HepG2 (cell line): ENCODE measurements at regions of chr16 and their contacts with region 1.

Region 1: GRCh38 chr16:50354629-50355456 is 13.9 kb downstream of the BRD7 start:
- DNase-seq: no peak
- ATAC-seq: no peak
- H3K4me3 ChIP-seq: no peak overlapping the region
- H3K27ac ChIP-seq: no peak overlapping the region
- H3K4me1 ChIP-seq: no peaks in the 10 kb centered on the region
- H3K27me3 ChIP-seq: no peaks in the 10 kb centered on the region
- CTCF ChIP-seq: peak; percentile 55
- EP300 ChIP-seq: no peak
- POLR2A ChIP-seq: no peak
- RAD21 ChIP-seq: no peak

Region 2: DNA sequence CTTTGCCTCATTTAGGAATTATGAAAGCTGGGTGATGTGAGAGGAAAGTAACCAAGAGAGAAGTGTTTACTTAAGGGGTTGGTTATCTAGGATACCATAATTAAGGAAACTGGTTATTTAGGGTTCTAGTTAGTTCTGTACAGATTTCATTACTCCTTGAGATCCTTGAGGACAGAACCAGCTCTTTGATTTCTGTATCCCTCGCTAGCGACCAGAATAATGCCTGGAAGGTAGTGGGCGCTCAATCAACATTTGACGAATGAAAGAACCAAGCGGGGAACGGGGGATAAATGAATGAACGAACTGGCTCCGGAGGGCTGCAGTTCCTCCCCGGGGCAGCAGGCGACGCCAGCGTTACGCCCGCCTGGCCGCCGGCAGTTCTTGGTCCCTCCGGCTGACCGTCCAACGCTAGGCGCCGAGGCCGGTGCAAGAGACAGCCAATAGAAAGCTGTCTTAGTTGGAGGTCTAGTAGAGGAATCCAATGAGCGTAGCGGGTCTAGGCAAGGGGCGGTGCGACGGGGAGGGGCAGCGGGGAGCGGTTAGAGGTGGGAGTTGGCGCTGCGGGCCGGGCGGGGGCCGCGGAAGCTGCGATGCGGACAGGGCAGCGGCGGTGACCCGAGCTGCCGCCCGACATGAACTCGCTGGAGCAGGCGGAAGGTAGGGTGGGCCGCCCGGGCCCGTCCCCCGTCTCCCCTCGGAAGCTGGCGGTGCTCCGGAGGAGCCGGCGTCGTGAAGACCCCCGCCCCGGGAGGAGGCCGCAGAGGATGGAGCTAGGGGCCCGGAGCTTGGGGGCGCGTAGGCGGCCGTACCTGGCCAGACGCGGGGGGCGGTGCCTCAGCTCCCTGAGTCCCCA is 329.9 kb before region 1 on chr16 and contains the start of gene CNEP1R1:
- CTCF ChIA-PET with region 1: no interaction called
- POLR2A ChIA-PET with region 1: no interaction called
- in situ Hi-C with region 1: loop called (anchors 25 kb)
- intact Hi-C with region 1: loop called (anchors 10 kb)
- DNase-seq: peak; percentile 97
- ATAC-seq: peak; percentile 97
- H3K4me3 ChIP-seq: peak within 1 kb of the TSS; percentile 71 to 96 (median 85)
- H3K27ac ChIP-seq: peak within 1 kb of the TSS; percentile 56
- H3K4me1 ChIP-seq: peaks cover 44% of the 10 kb centered on the region
- H3K27me3 ChIP-seq: no peaks in the 10 kb centered on the region; a peak in 2 of 5 replicates
- CTCF ChIP-seq: peak; percentile 100
- EP300 ChIP-seq: peak; percentile 35 to 50; a peak in 2 of 4 replicates
- POLR2A ChIP-seq: peak; percentile 57 to 86
- RAD21 ChIP-seq: peak; percentile 100
- total RNA-seq, gene CNEP1R1: 22.9 and 23.6 TPM in 2 replicates

Region 3: DNA sequence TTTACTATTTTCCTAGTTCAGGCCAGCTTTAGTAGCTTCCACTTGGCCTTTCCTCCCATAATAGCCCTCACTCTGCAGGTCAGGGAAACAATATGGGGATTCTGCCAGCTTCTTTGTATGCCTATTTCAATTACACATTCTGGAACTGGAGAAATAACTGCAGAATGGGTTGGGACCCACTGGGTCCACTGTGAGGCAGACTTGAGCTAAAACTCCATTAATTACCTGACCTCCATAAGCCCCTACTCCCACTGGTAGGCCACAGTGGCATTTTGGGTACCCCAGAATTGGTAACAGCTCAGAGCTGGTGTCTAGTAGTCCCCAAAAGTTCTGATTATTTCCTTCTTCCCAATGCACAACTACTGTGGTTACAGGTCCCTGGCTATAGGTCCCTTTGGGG is 218.4 kb before region 1 on chr16:
- CTCF ChIA-PET with region 1: no interaction called
- POLR2A ChIA-PET with region 1: no interaction called
- in situ Hi-C with region 1: no loop called
- intact Hi-C with region 1: loop called (anchors 10 kb)
- DNase-seq: no peak
- ATAC-seq: peak; percentile 41; the same call in 2 of the 3 replicates
- H3K4me3 ChIP-seq: no peak overlapping the region
- H3K27ac ChIP-seq: no peak overlapping the region
- H3K4me1 ChIP-seq: peaks cover 4% of the 10 kb centered on the region; the same call in 1 of the 2 replicates
- H3K27me3 ChIP-seq: peaks cover 1 to 10% of the 10 kb centered on the region in 2 experiments; a peak in 3 of 5 replicates
- CTCF ChIP-seq: peak; percentile 36
- EP300 ChIP-seq: no peak
- POLR2A ChIP-seq: no peak
- RAD21 ChIP-seq: no peak

Region 4: GRCh38 chr16:50210266-50211038 is 144.4 kb before region 1 on chr16:
- CTCF ChIA-PET with region 1: interaction called, 21 read pairs
- POLR2A ChIA-PET with region 1: no interaction called
- in situ Hi-C with region 1: no loop called
- intact Hi-C with region 1: loop called (anchors 2 kb)
- DNase-seq: peak; percentile 77
- ATAC-seq: peak; percentile 98
- H3K4me3 ChIP-seq: no peak overlapping the region
- H3K27ac ChIP-seq: no peak overlapping the region
- H3K4me1 ChIP-seq: peaks cover 40% of the 10 kb centered on the region
- H3K27me3 ChIP-seq: no peaks in the 10 kb centered on the region
- CTCF ChIP-seq: peak; percentile 94
- EP300 ChIP-seq: no peak
- POLR2A ChIP-seq: no peak
- RAD21 ChIP-seq: peak; percentile 92

Region 5: DNA sequence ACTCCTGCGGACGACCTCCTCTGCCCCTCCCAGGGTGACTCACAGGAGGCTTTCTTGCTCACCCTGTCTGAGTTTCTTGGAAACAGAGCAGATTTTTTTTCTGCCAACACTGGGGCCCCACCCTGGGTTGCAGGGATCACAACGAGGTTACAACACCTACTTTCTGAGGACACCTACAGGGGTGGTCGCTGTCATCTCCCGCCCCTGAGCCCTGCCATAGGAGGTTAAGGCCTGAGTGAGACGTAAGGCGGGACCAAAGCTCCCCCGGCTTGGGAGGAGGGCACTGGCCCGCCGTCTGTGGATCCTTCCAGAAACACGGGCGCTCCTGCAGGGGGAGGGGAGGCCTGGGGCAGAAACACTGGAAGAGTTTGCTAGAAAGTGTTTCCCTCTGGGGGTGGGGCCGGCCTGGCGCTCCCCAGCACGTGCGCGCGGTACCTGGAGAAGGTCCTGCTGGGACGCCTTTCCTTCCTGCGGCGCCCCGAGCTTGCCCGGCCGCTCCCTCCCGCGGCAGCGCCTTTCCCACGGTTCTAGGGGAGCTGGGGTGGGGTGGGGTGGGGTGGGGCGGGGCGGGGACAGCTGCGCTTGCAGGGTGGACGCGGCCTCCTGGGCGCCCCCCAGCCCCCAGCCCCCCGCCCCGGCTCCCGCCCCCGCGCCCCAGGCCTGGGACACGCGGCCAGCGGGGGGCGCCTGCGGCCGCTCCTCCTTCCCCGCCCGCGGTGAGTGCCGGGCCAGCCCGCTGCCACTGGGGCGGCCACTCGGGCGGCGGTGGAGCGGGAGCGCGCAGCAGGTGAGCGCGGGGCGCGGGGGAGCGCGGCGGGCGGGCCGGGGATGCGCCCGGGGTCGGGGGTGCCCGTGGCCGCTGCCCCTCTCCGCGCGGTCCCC is 109.2 kb before region 1 on chr16:
- CTCF ChIA-PET with region 1: no interaction called
- POLR2A ChIA-PET with region 1: no interaction called
- in situ Hi-C with region 1: loop called (anchors 10 kb)
- intact Hi-C with region 1: loop called (anchors 5 kb)
- DNase-seq: peak; percentile 16
- ATAC-seq: peak; percentile 67
- H3K4me3 ChIP-seq: peak overlapping the region; percentile 79 to 85 (median 81)
- H3K27ac ChIP-seq: no peak overlapping the region
- H3K4me1 ChIP-seq: peaks cover 25% of the 10 kb centered on the region
- H3K27me3 ChIP-seq: peaks cover 0 to 29% of the 10 kb centered on the region in 2 experiments; a peak in 4 of 5 replicates
- CTCF ChIP-seq: peak; percentile 37; the same call in 1 of the 2 replicates
- EP300 ChIP-seq: no peak
- POLR2A ChIP-seq: no peak
- RAD21 ChIP-seq: peak; percentile 36; the same call in 1 of the 2 replicates

Region 6: GRCh38 chr16:50326949-50327402 is 27.9 kb before region 1 on chr16:
- CTCF ChIA-PET with region 1: interaction called, 7 read pairs
- POLR2A ChIA-PET with region 1: no interaction called
- in situ Hi-C with region 1: loop called (anchors 5 kb)
- intact Hi-C with region 1: loop called (anchors 1 kb)
- DNase-seq: no peak
- ATAC-seq: peak; percentile 77
- H3K4me3 ChIP-seq: no peak overlapping the region
- H3K27ac ChIP-seq: no peak overlapping the region
- H3K4me1 ChIP-seq: peaks cover 16% of the 10 kb centered on the region
- H3K27me3 ChIP-seq: no peaks in the 10 kb centered on the region
- CTCF ChIP-seq: peak; percentile 62
- EP300 ChIP-seq: no peak
- POLR2A ChIP-seq: no peak
- RAD21 ChIP-seq: no peak; the same call in 1 of the 2 replicates